ENCODE measurements at regions of chr5 and their contacts with region 1.

Region 1: DNA sequence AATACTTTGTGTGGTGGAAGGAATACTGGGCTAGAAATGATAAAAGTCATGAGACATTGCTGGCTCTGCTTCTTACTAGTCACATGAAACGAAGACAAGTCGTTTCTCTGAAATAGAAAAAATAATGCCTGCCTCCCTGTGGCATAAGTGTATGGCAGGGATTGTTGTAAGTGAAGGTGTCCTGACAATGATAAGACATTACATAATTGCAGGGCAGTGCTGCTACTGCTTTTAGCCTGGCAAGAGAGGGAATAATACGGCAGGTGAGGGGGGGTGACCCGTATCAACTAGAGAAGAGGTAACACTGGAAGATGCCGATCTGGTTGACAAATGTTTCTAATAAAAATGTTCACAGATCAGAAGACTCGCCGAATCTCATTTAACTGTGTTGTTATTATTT is 314.3 kb downstream of the KIAA0825 start:
- DNase-seq: no peak
- H3K4me3 ChIP-seq: no peak overlapping the region
- H3K4me3 Mint-ChIP-seq: no peak overlapping the region
- H3K27ac Mint-ChIP-seq: no peak overlapping the region
- H3K4me1 ChIP-seq: peaks cover 3% of the 10 kb centered on the region; the same call in 1 of the 2 replicates
- H3K4me1 Mint-ChIP-seq: peaks cover 6% of the 10 kb centered on the region
- H3K27me3 ChIP-seq: no peaks in the 10 kb centered on the region
- H3K27me3 Mint-ChIP-seq: no peaks in the 10 kb centered on the region
- CTCF ChIP-seq: no peak

Region 2: GRCh38 chr5:94209774-94210355 is 94.3 kb before region 1 on chr5:
- CTCF ChIA-PET with region 1: no interaction called
- POLR2A ChIA-PET with region 1: no interaction called
- intact Hi-C with region 1: loop called (anchors 5 kb)
- DNase-seq: no peak
- H3K4me3 ChIP-seq: no peak overlapping the region
- H3K4me3 Mint-ChIP-seq: no peak overlapping the region
- H3K27ac Mint-ChIP-seq: no peak overlapping the region
- H3K4me1 ChIP-seq: peaks cover 64% of the 10 kb centered on the region
- H3K4me1 Mint-ChIP-seq: peaks cover 52% of the 10 kb centered on the region
- H3K27me3 ChIP-seq: no peaks in the 10 kb centered on the region
- H3K27me3 Mint-ChIP-seq: no peaks in the 10 kb centered on the region
- CTCF ChIP-seq: no peak

Measured in Caco-2 (cell line).